Sigmoid colon (tissue), 7 donors: ENCODE measurements at regions of chr2 and their contacts with region 1.

Region 1: DNA sequence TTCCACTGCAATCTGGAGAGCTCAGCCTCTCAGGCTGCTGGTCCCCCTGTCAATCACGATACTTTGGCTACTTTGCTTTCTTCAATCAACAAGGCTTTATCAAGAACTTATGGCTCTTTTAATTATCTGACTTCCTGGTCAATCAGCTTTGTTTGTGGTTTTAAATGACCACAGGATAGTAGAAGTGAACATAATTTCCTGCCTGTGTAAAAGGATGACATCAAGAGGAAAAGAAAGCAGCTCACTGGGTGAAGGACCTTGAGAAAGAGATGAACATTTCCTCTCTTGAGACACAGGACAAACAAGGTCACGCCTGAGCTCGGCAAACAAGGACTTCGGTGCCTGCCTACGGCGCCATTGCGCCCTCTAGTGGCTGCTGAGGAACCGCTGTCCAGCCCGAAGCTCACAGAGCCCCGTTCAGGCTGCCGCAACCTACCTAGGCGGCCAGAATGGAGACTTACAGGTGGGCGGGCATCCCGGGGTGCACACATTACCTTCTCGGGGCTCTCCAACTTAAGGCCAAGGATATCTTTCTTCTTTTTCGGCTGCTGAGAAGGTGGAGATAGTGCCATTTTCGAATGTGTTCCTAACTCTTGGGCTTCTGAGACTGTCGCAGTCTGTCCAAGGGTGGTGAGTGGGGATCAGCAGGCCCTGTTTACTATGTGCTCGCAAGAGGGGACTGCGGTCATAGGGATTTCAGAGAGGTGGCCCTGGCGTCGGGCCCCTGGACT is 54.0 kb downstream of the IL1RL2 start:
- DNase-seq: peak; percentile 96
- H3K4me3 ChIP-seq: no peak overlapping the region
- H3K27ac ChIP-seq: peak overlapping the region; percentile 51 to 63 (median 54)
- H3K4me1 ChIP-seq: peaks cover 0 to 11% (median 4%) of the 10 kb centered on the region in 4 donors
- H3K27me3 ChIP-seq: no peaks in the 10 kb centered on the region
- CTCF ChIP-seq: peak; percentile 89 to 96 (median 94)
- EP300 ChIP-seq: no peak
- POLR2A ChIP-seq: no peak

Region 2: DNA sequence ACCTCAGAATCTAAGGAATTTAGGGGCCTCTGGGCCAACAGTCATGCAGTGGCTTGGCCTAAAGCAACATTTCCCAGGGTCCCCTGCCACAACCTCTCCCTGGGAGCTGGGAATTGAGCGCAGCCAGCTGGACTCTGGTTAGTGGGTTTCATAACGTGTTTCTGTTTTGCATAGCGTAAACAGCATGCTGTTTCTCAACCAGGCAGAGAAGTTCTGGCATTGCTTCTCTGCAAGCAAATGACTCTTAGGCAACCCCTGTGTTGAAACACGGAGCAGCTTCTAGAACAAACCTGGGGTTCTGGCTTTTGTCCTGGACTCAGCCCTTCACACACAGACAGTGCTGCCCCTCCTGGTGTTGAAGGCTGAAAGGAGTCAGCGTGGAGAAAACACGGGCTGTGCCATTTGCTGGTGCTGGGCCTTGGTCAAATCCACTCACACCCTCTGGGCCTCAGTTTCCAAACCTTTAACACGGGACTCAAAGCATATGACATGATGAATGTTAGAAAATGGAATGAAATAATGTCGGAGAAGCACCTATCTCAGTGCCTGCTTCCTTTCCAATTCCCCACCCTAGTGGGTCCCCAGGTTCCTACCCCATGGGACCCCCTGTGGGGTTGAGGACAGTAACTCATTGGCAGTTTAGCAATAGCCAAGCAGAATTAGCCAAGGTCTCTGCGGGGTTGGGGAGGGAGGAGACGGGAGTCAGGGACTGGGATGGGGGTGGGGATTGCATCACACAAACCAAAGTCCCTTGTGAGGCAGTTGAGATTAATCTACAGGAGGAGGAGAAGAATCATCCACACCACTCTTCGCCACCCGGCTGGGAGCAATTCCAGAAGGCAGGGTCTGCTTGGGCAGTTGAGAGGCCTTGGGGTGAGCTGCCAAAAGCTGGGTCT is 279.3 kb before region 1 on chr2:
- intact Hi-C with region 1: loop called (anchors 5 kb)
- DNase-seq: peak; percentile 97
- H3K4me3 ChIP-seq: peak overlapping the region in 1 of 4 donors; percentile 3
- H3K27ac ChIP-seq: peak overlapping the region; percentile 79 to 90 (median 84)
- H3K4me1 ChIP-seq: peaks cover 0 to 32% (median 24%) of the 10 kb centered on the region in 4 donors
- H3K27me3 ChIP-seq: no peaks in the 10 kb centered on the region
- CTCF ChIP-seq: peak in 1 of 4 experiments; percentile 12
- EP300 ChIP-seq: peak; percentile 75 to 96 (median 94)
- POLR2A ChIP-seq: no peak

Region 3: DNA sequence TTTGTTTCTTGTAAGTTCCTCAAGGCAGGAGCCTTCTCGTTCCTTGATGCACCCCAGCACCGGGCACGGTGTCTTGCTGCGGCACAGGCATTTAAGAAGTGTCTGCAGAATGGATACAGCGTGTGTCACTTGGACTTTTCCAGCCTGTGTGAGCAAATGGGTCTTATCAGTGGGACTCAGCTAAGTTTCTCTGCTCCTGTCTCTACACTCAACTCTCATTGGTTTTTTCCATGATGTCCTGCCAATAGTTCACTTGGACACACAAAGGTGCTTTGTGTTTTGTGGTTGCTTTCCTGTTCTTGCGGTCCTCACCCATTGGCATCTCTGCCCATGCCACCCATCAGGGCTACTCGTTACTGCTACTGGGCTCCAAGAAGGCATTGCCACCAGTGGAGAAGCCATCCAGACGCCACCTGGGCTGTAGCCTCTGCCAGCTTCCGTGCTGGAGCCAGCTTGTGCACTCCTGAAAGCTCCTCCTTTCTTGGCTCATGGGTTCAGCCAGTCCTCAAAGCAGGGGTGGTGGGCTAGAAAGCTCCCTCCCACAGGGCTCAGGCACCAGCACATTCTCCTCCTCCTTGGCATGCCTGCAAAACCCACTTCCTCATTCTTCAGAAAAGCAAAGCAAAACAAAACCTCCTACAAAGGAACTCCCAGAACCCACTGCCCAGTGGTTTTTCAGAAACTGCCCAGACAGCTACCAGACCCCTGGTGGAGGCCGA is 207.6 kb before region 1 on chr2:
- intact Hi-C with region 1: no loop called
- DNase-seq: no peak
- H3K4me3 ChIP-seq: no peak overlapping the region
- H3K27ac ChIP-seq: peak overlapping the region in 3 of 4 donors; percentile 1 to 57 (median 20)
- H3K4me1 ChIP-seq: peaks cover 0 to 25% (median 15%) of the 10 kb centered on the region in 4 donors
- H3K27me3 ChIP-seq: no peaks in the 10 kb centered on the region
- CTCF ChIP-seq: no peak
- EP300 ChIP-seq: no peak
- POLR2A ChIP-seq: no peak

Region 4: DNA sequence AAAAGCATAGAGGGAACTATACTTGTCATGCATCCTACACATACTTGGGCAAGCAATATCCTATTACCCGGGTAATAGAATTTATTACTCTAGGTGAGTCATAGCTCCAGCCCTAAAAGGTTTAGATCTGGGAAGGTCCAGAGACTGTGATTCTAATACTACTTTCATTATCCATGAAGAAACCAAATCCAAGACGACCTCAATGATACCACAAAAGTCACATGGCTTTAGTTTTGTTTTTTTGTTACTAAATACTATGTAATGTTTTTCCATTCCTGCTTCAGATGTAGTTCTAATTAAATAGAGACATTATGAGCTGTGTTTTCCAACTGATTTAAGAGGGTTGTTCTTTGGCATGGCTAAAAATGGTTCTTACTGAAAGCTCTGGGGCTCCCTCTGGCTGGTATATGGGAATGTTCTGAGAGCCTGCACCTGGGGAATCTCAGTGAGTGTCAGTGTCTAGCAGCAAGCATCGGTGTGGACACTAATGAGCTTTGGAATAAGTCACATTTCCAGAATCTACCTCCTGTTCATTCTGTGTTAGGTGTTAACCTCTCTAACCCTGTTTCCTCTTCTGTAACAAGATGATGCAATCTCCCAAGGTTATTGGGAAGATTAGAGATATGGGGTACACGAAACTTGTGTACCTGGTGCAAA is 74.5 kb before region 1 on chr2:
- intact Hi-C with region 1: loop called (anchors 5 kb)
- DNase-seq: peak; percentile 77
- H3K4me3 ChIP-seq: no peak overlapping the region
- H3K27ac ChIP-seq: peak overlapping the region in 2 of 4 donors; percentile 30 to 52
- H3K4me1 ChIP-seq: peaks cover 0 to 16% (median 2%) of the 10 kb centered on the region in 4 donors
- H3K27me3 ChIP-seq: no peaks in the 10 kb centered on the region
- CTCF ChIP-seq: peak; percentile 71 to 78 (median 72)
- EP300 ChIP-seq: no peak
- POLR2A ChIP-seq: no peak

Region 5: DNA sequence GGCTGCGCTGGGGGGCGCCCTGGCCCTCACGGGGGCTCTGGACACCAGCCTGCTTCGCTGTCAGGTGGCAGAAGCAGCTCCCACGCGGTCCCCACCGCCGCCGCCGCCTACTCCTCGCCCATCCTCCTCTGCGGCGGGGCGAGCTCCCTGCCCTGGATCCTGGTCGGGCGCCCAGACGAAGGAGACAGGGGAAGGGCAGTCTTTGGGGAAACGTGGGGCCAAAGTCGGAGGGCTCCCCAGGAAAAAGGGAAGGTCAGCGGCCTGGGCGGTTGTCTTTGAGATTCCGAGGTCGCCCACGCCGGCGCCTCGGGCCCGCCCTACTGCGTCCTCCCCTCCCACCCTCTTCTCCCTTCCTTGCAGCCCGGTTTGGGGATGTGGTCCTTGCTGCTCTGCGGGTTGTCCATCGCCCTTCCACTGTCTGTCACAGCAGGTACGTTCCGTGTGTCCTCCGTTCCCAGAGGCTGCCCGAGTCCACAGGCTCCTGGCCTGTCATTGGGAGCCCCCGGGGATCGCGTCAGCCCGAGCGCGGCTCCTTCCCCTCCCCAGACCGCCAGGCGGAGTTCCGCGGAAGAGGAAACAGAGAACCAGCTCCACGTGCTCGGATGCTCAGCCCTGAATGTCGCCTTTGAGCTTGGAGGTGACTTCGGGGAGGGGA is 53.2 kb before region 1 on chr2:
- intact Hi-C with region 1: loop called (anchors 5 kb)
- DNase-seq: peak; percentile 79
- H3K4me3 ChIP-seq: peak overlapping the region; percentile 37 to 57 (median 50)
- H3K27ac ChIP-seq: peak overlapping the region; percentile 17 to 54 (median 28)
- H3K4me1 ChIP-seq: peaks cover 0 to 12% (median 8%) of the 10 kb centered on the region in 4 donors
- H3K27me3 ChIP-seq: peaks cover 0 to 5% (median 0%) of the 10 kb centered on the region in 3 donors
- CTCF ChIP-seq: peak in 2 of 4 experiments; percentile 27 to 30
- EP300 ChIP-seq: no peak
- POLR2A ChIP-seq: no peak